ENCODE measurements at regions of chr2 and their contacts with region 1.

Region 1: DNA sequence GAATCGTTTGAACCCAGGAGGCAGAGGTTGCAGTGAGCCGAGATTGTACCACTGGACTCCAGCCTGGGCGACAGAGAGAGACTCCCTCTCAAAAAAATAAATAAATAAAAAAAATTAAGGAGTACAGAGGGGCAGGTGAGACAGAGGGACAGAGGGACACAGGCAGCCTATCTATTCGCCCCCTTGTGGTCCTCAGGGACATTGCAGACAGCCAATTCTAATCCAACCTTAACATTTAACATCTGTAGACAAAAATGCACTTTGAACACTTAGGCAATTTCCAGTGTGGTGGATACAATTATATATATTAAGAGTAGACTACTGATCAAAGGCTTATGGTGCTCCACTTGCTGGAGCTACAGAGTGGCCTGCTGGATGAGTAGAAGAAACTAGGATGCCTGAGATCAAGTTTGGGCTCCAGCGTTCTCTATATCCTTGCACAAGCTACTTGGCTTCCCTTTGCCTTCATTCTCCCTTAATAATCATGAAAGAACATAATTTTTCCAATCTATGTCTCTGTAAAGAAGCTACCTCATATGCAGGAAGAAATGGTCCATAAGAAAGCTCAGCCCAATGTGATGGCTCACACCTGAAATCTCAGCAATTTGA is 8.2 kb upstream of the SMARCAL1 start:
- DNase-seq: peak; percentile 65
- ATAC-seq: peak; percentile 72
- H3K4me3 Mint-ChIP-seq: no peak overlapping the region
- H3K27ac Mint-ChIP-seq: no peak overlapping the region
- H3K4me1 Mint-ChIP-seq: no peaks in the 10 kb centered on the region
- H3K27me3 Mint-ChIP-seq: no peaks in the 10 kb centered on the region

Region 2: DNA sequence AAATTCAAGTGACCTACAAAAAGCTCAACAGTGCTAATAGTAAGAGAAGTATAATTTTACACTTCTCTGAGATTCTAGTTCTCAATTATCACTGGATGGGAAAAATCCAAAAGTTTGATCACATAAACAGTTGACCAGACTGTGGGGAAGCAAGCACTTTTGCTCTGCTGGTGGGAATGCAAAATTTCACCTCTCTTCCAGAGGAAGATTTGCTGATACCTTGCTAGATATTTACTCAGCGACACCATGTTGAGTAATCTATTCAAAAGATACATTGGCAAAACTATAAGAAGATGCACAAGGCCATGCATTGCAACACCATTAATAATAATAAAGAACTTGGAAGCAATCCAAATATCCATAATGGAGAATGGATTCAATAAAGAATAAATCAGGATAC is 595.1 kb before region 1 on chr2:
- CTCF ChIA-PET with region 1: no interaction called
- POLR2A ChIA-PET with region 1: no interaction called
- intact Hi-C with region 1: no loop called
- DNase-seq: no peak
- ATAC-seq: no peak
- H3K4me3 Mint-ChIP-seq: no peak overlapping the region
- H3K27ac Mint-ChIP-seq: no peak overlapping the region
- H3K4me1 Mint-ChIP-seq: peaks cover 16% of the 10 kb centered on the region
- H3K27me3 Mint-ChIP-seq: no peaks in the 10 kb centered on the region

Region 3: GRCh38 chr2:216151313-216152030 is 252.6 kb before region 1 on chr2:
- CTCF ChIA-PET with region 1: interaction called, 4 read pairs
- POLR2A ChIA-PET with region 1: no interaction called
- intact Hi-C with region 1: loop called in 1 of 2 experiments (anchors 2 kb)
- DNase-seq: no peak
- ATAC-seq: peak; percentile 60
- H3K4me3 Mint-ChIP-seq: no peak overlapping the region
- H3K27ac Mint-ChIP-seq: peak overlapping the region; percentile 73
- H3K4me1 Mint-ChIP-seq: peaks cover 31% of the 10 kb centered on the region
- H3K27me3 Mint-ChIP-seq: no peaks in the 10 kb centered on the region

Region 4: DNA sequence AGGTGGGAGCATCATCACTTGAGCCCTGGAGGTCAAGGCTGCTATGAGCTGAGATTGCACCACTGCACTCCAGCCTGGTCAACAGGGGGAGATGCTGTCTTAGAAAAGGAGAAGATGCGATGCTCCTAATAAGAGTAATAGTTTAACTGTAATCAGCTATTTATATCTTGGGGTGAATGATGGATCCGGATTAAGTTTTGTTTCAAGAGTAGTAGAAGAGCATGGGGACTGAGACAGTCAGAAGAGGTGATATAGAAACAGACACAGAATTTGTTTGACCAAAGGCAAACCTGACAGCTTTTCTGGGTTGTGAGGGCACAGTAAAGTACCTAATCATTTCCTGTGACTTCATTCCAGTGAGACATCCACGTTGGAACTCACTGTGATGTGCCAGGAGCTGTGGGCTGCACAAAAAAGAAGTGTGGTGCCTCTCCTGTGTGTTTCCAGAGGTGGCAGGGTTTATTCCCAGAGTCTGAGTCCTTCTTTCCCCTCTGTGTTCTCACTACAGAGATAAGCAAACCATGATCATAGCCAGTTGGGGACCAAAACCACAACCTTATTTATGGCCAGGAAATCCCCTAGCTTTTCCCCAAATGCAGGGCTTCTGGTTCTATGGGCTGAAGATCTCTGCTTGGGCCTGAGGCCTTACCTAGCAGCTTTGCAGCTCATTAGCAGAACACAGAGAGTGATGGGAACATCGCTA is 181.3 kb before region 1 on chr2:
- CTCF ChIA-PET with region 1: interaction called, 9 read pairs
- POLR2A ChIA-PET with region 1: no interaction called
- intact Hi-C with region 1: loop called (anchors 2 to 5 kb)
- DNase-seq: peak; percentile 49
- ATAC-seq: peak; percentile 70
- H3K4me3 Mint-ChIP-seq: peak overlapping the region; percentile 5
- H3K27ac Mint-ChIP-seq: peak overlapping the region; percentile 83
- H3K4me1 Mint-ChIP-seq: peaks cover 33% of the 10 kb centered on the region
- H3K27me3 Mint-ChIP-seq: no peaks in the 10 kb centered on the region

Region 5: DNA sequence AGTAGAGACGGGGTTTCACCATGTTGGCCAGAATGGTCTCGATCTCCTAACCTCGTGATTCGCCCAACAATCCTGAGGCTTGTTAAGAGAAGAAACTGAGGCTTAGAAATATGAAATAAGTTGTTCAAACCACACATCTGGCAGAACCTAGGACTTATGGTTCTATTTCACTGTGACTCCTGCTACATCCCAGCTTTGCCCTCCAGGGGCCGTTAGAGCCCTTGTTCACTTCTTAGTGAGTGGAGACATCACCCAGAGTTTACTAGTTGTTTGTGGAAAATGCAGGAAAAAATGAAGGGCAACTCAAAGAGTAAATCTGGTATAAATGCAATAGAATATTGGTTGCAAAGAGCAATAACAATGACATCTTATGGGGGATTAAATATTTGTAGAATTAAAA is 75.8 kb before region 1 on chr2:
- CTCF ChIA-PET with region 1: interaction called, 20 read pairs
- POLR2A ChIA-PET with region 1: no interaction called
- intact Hi-C with region 1: no loop called
- DNase-seq: peak; percentile 19
- ATAC-seq: no peak
- H3K4me3 Mint-ChIP-seq: no peak overlapping the region
- H3K27ac Mint-ChIP-seq: no peak overlapping the region
- H3K4me1 Mint-ChIP-seq: no peaks in the 10 kb centered on the region
- H3K27me3 Mint-ChIP-seq: no peaks in the 10 kb centered on the region

Measured in activated CD4-positive, alpha-beta T cell treated with anti-CD3 and anti-CD28 coated beads for 36 hours (primary cell).